ENCODE measurements at regions of chr1 and their contacts with region 1.

Region 1: GRCh38 chr1:50109647-50110075 is 941 bp downstream of the ELAVL4 start:
- DNase-seq: no peak
- H3K4me3 ChIP-seq: peak overlapping the region; percentile 39 to 59
- H3K27ac ChIP-seq: peak overlapping the region in 1 of 2 experiments; percentile 92; a peak in 2 of 4 replicates
- H3K4me1 ChIP-seq: no peaks in the 10 kb centered on the region; a peak in 2 of 4 replicates
- H3K27me3 ChIP-seq: peaks cover 5% of the 10 kb centered on the region; the same call in 1 of the 2 replicates
- CTCF ChIP-seq: no peak
- EP300 ChIP-seq: no peak
- RAD21 ChIP-seq: no peak

Region 2: GRCh38 chr1:50047916-50048694 is 61.6 kb before region 1 on chr1:
- CTCF ChIA-PET with region 1: interaction called, 17 read pairs
- POLR2A ChIA-PET with region 1: interaction called, 3 read pairs
- DNase-seq: peak; percentile 87
- H3K4me3 ChIP-seq: peak overlapping the region; percentile 53 to 61
- H3K27ac ChIP-seq: peak overlapping the region in 1 of 2 experiments; percentile 43; a peak in 1 of 4 replicates
- H3K4me1 ChIP-seq: no peaks in the 10 kb centered on the region; a peak in 1 of 4 replicates
- H3K27me3 ChIP-seq: no peaks in the 10 kb centered on the region; the same call in 1 of the 2 replicates
- CTCF ChIP-seq: peak; percentile 46
- EP300 ChIP-seq: no peak
- RAD21 ChIP-seq: peak; percentile 54

Region 3: DNA sequence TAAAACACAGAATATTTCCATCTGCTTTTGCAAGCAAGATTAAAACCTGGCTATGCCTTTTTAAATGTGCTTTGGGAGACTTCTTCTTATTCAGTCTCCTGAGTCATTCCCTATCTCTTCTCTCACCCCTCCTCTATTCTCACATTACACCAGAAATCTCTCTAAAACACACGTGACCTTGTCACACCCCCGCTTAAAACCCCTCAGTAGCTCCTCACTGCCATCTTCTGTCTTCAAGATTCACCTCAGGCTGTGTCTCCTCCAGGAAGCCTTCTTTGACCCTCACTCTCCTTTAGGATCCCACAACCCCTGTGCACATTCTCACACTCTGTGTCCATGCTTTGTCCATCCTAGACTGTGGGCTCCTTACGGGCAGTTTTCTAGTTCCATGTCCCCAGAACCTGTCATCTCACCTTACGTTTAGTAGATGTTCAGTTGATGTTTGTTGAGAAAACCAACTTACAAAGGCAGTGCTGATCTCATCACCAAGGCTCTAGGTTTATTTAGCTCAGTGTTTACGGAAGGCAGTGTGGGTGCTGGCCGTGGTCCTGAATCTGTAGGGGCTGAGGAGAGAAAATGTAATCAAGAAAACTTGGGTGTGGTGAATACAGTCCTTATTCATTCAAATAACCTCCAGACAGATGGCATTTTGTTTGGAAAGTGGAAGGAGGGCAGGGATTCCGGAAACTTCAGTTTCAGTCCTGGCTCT is 170.1 kb after region 1 on chr1:
- CTCF ChIA-PET with region 1: interaction called, 117 read pairs
- POLR2A ChIA-PET with region 1: interaction called, 13 read pairs
- DNase-seq: no peak
- H3K4me3 ChIP-seq: no peak overlapping the region
- H3K27ac ChIP-seq: peak overlapping the region in 1 of 2 experiments; percentile 100; a peak in 2 of 4 replicates
- H3K4me1 ChIP-seq: peaks cover 0 to 51% of the 10 kb centered on the region in 2 experiments; a peak in 2 of 4 replicates
- H3K27me3 ChIP-seq: no peaks in the 10 kb centered on the region
- CTCF ChIP-seq: no peak
- EP300 ChIP-seq: no peak
- RAD21 ChIP-seq: no peak

Region 4: DNA sequence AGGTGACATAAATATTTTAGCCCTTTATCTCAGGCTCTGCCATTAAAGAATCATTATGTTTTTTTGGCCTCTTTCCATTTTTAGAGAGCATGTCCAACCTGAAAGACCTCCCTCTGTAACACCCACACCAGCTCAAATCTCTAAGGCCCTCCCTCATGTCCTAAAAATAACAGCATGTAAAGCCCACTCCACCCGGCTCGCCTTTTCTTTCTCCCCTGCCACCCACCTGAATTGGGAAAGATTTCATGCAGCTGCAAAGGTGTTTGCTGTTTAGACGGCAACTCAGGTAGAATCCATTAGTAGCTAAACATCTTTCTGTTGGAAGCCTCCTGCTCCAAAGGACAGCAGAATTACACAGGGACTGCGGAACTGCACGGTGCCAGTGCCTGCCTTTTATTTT is 233.7 kb after region 1 on chr1:
- CTCF ChIA-PET with region 1: interaction called, 17 read pairs
- POLR2A ChIA-PET with region 1: interaction called, 13 read pairs
- DNase-seq: no peak
- H3K4me3 ChIP-seq: no peak overlapping the region
- H3K27ac ChIP-seq: peak overlapping the region in 1 of 2 experiments; percentile 97; a peak in 2 of 4 replicates
- H3K4me1 ChIP-seq: peaks cover 0 to 49% of the 10 kb centered on the region in 2 experiments; a peak in 2 of 4 replicates
- H3K27me3 ChIP-seq: no peaks in the 10 kb centered on the region
- CTCF ChIP-seq: no peak
- EP300 ChIP-seq: no peak
- RAD21 ChIP-seq: no peak